PC-3 (cell line): ENCODE measurements at regions of chr14 and their contacts with region 1.

Region 1: GRCh38 chr14:66610154-66610563 is 102.2 kb downstream of the GPHN start:
- DNase-seq: peak; percentile 72
- ATAC-seq: peak; percentile 94
- H3K4me3 ChIP-seq: no peak overlapping the region; the same call in 1 of the 2 replicates
- H3K27ac ChIP-seq: no peak overlapping the region
- H3K4me1 ChIP-seq: no peaks in the 10 kb centered on the region
- H3K27me3 ChIP-seq: no peaks in the 10 kb centered on the region
- CTCF ChIP-seq: peak; percentile 80

Region 2: DNA sequence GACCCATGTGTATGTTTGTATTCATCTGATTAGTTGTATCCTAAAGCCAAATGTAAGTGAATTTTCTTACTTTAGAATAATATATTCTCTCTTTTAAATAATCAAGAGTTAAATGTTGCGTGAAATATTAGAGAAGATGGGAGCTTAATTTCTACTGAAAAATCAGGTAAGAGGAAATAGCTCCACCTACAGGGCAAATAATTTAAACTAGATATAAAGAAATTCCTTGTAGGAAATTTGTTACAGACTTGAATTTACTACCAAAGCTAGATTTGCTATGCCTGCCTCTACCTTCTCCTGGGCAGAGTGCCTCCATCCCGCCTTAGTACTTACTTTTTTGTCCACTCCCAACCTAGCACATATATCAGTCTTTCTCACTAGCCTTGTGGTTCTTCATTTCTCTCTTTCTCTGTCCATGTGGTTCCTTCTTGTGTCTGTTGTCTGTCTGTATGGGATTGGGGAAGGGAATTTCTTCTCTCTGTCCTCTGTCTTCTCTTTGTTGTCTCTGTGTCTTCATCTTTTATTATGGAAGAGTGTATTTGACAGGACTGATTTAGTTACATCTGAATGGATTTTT is 675.8 kb after region 1 on chr14:
- CTCF ChIA-PET with region 1: interaction called, 3 read pairs
- POLR2A ChIA-PET with region 1: no interaction called
- intact Hi-C with region 1: loop called (anchors 10 kb)
- DNase-seq: peak; percentile 86
- ATAC-seq: peak; percentile 52
- H3K4me3 ChIP-seq: no peak overlapping the region
- H3K27ac ChIP-seq: no peak overlapping the region
- H3K4me1 ChIP-seq: no peaks in the 10 kb centered on the region
- H3K27me3 ChIP-seq: no peaks in the 10 kb centered on the region
- CTCF ChIP-seq: peak; percentile 81